ENCODE measurements at regions of chr2 and their contacts with region 1.

Region 1: DNA sequence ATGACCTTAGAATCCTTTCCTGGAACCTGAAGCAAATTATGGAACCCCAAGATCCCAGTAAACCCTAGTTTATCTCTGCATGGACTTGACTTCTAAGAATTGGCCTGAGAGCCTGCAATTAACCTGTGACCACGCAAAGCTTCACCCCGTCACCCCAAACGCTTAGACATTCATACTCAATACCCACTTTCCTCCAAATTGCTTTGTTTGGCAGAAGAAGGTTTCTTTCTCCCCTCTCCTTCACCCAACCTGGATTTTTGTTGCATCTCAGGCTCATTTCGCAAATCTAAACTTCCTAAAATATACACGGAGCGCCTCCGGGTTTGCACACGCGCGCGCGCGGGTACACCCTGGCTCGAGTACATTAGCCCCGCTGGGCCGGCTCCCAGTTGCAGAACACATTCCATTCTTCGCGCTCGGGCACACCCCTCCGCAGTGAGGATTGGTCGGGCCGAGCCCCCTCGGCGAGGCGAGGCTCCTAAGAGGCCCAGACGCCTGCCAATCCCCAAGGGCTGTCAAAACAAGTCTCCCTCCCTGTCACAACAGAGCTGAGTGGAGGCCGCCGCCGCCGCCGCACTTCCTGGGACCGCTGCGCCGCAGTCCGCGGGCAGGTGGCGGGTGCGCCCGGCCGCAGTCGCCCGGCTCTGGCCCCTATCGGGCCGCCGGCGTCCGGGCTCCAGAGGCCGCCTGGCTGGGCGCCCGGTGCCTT is at the start of gene PLCL1:
- DNase-seq: peak; percentile 82 to 95 (median 90)
- ATAC-seq: peak; percentile 96
- H3K4me3 ChIP-seq: peak within 1 kb of the TSS; percentile 77
- H3K4me3 Mint-ChIP-seq: peak within 1 kb of the TSS; percentile 96
- H3K27ac ChIP-seq: peak within 1 kb of the TSS in 1 of 2 donors; percentile 68
- H3K27ac Mint-ChIP-seq: peak within 1 kb of the TSS; percentile 87
- H3K4me1 ChIP-seq: peaks cover 29% of the 10 kb centered on the region
- H3K4me1 Mint-ChIP-seq: peaks cover 55% of the 10 kb centered on the region
- H3K27me3 ChIP-seq: no peaks in the 10 kb centered on the region
- H3K27me3 Mint-ChIP-seq: no peaks in the 10 kb centered on the region
- CTCF ChIP-seq: no peak
- total RNA-seq, gene PLCL1: 27.0 to 28.3 TPM

Region 2: GRCh38 chr2:197873293-197873701 is 69.1 kb after region 1 on chr2:
- CTCF ChIA-PET with region 1: no interaction called
- POLR2A ChIA-PET with region 1: interaction called, 5 read pairs
- intact Hi-C with region 1: loop called (anchors 5 kb)
- DNase-seq: no peak
- ATAC-seq: no peak
- H3K4me3 ChIP-seq: no peak overlapping the region
- H3K4me3 Mint-ChIP-seq: no peak overlapping the region
- H3K27ac ChIP-seq: no peak overlapping the region
- H3K27ac Mint-ChIP-seq: no peak overlapping the region
- H3K4me1 ChIP-seq: peaks cover 33% of the 10 kb centered on the region
- H3K4me1 Mint-ChIP-seq: peaks cover 82% of the 10 kb centered on the region
- H3K27me3 ChIP-seq: no peaks in the 10 kb centered on the region
- H3K27me3 Mint-ChIP-seq: no peaks in the 10 kb centered on the region
- CTCF ChIP-seq: no peak

Region 3: GRCh38 chr2:197931661-197932312 is 127.6 kb after region 1 on chr2:
- CTCF ChIA-PET with region 1: no interaction called
- POLR2A ChIA-PET with region 1: no interaction called
- intact Hi-C with region 1: loop called (anchors 5 kb)
- DNase-seq: no peak
- ATAC-seq: no peak
- H3K4me3 ChIP-seq: no peak overlapping the region
- H3K4me3 Mint-ChIP-seq: no peak overlapping the region
- H3K27ac ChIP-seq: no peak overlapping the region
- H3K27ac Mint-ChIP-seq: no peak overlapping the region
- H3K4me1 ChIP-seq: no peaks in the 10 kb centered on the region
- H3K4me1 Mint-ChIP-seq: peaks cover 71% of the 10 kb centered on the region
- H3K27me3 ChIP-seq: no peaks in the 10 kb centered on the region
- H3K27me3 Mint-ChIP-seq: no peaks in the 10 kb centered on the region
- CTCF ChIP-seq: no peak

Region 4: DNA sequence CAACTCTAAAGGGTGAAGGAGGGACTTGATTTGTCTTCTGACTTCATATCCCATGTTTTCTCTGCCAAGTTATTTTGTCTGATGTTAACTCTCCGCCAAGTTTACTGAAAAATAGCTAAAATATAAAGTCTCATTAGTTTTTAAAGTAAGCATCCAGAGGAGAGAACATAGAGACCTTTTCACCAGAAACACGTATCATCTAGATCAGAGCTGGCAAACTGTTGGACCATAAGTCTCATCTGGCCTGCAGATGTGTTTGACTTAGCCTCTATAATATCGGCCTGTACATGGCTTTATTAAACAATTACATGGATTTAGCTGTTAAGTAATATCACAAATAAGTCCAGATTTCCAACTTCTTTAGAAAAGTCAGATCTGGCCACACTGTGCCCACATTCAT is 182.8 kb after region 1 on chr2:
- CTCF ChIA-PET with region 1: interaction called, 3 read pairs
- POLR2A ChIA-PET with region 1: no interaction called
- intact Hi-C with region 1: loop called (anchors 5 kb)
- DNase-seq: no peak
- ATAC-seq: no peak
- H3K4me3 ChIP-seq: no peak overlapping the region
- H3K4me3 Mint-ChIP-seq: no peak overlapping the region
- H3K27ac ChIP-seq: no peak overlapping the region
- H3K27ac Mint-ChIP-seq: no peak overlapping the region
- H3K4me1 ChIP-seq: no peaks in the 10 kb centered on the region
- H3K4me1 Mint-ChIP-seq: peaks cover 37% of the 10 kb centered on the region
- H3K27me3 ChIP-seq: no peaks in the 10 kb centered on the region
- H3K27me3 Mint-ChIP-seq: no peaks in the 10 kb centered on the region
- CTCF ChIP-seq: no peak

Region 5: DNA sequence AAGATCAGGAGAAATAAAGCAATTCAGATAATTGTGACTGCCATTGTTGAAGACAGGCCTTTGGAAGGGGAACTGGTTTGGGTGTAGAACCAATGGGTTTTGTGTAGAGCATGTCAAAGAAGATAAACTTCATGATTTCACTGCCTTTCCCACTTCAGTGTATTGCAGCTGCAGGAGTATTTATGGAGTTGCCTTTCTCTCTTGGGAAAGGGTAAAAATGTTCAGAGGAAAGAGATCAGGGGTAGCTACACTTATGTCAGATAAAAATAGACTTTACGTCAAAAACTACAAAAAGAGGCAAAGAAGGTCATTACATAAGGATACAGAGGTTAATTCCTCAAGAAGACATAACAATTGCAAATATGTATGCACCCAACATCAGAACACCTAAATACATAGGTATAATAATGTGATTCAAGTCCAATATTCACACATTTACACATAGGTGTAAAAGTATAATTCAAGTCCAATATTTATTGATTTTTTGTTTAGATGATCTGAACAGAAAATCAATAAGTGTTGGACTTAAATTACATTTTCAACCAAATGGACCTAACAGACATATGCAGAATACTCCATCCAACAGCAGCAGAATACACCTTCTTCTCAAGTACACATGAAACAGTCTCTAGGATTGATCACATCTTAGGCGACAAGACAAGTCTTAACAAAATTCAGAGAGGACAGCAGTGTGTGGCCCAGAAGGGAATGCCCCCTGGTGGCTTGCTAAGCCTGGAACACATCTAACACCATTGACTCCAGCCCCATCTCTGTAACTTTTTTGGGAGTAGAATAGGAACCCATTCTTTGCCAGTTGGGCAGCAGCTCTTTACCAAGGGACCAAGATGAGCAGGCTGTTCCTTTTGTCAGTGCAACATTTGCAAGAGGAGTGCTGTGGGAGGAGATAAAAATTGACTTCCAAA is 249.8 kb after region 1 on chr2:
- CTCF ChIA-PET with region 1: interaction called, 3 read pairs
- POLR2A ChIA-PET with region 1: interaction called, 4 read pairs
- intact Hi-C with region 1: loop called (anchors 1 kb)
- DNase-seq: peak; percentile 15 to 70 (median 37)
- ATAC-seq: peak; percentile 81
- H3K4me3 ChIP-seq: no peak overlapping the region
- H3K4me3 Mint-ChIP-seq: no peak overlapping the region
- H3K27ac ChIP-seq: no peak overlapping the region
- H3K27ac Mint-ChIP-seq: no peak overlapping the region
- H3K4me1 ChIP-seq: no peaks in the 10 kb centered on the region
- H3K4me1 Mint-ChIP-seq: peaks cover 49% of the 10 kb centered on the region
- H3K27me3 ChIP-seq: no peaks in the 10 kb centered on the region
- H3K27me3 Mint-ChIP-seq: no peaks in the 10 kb centered on the region
- CTCF ChIP-seq: peak; percentile 42

Region 6: DNA sequence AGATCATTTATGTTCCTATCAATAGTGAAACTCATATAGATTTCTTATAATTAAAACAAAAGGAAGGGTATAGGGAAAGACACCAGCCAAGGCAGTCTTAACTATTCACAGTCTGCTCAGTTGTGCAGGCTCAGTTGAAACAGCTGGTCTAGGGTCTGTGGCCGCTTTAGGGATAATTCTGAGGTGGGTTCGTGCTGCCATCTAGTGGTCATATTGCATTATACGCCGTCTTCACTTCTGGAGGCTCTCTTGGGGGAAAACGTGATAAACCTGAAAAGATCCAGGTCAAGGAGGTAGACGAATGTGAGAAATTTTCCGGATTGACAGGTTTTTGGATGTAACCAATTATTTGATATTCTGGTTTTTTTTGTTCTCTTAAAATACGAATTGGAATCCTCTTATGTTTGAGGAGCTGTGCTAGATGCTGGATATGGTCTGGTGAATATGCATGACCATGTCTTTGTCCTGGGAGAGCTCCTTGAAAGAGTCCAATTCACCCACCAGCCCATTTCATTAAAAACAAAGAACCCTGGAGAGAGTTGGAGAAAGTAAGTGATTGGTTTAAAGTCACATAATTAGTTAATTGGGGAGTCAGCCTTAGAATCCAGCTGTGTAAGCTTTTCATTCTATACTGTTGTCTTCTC is 492.6 kb after region 1 on chr2:
- CTCF ChIA-PET with region 1: interaction called, 7 read pairs
- POLR2A ChIA-PET with region 1: interaction called, 6 read pairs
- intact Hi-C with region 1: loop called (anchors 1 kb)
- DNase-seq: peak; percentile 28 to 82 (median 48)
- ATAC-seq: peak; percentile 77
- H3K4me3 ChIP-seq: no peak overlapping the region
- H3K4me3 Mint-ChIP-seq: no peak overlapping the region
- H3K27ac ChIP-seq: no peak overlapping the region
- H3K27ac Mint-ChIP-seq: no peak overlapping the region
- H3K4me1 ChIP-seq: no peaks in the 10 kb centered on the region
- H3K4me1 Mint-ChIP-seq: no peaks in the 10 kb centered on the region
- H3K27me3 ChIP-seq: peaks cover 0 to 2% of the 10 kb centered on the region in 2 experiments
- H3K27me3 Mint-ChIP-seq: peaks cover 32% of the 10 kb centered on the region
- CTCF ChIP-seq: peak; percentile 94

Measured in CD4-positive, alpha-beta T cell (primary cell).